Left ventricle myocardium inferior (tissue), 1 donor: ENCODE measurements at regions of chr17 and their contacts with region 1.

Region 1: DNA sequence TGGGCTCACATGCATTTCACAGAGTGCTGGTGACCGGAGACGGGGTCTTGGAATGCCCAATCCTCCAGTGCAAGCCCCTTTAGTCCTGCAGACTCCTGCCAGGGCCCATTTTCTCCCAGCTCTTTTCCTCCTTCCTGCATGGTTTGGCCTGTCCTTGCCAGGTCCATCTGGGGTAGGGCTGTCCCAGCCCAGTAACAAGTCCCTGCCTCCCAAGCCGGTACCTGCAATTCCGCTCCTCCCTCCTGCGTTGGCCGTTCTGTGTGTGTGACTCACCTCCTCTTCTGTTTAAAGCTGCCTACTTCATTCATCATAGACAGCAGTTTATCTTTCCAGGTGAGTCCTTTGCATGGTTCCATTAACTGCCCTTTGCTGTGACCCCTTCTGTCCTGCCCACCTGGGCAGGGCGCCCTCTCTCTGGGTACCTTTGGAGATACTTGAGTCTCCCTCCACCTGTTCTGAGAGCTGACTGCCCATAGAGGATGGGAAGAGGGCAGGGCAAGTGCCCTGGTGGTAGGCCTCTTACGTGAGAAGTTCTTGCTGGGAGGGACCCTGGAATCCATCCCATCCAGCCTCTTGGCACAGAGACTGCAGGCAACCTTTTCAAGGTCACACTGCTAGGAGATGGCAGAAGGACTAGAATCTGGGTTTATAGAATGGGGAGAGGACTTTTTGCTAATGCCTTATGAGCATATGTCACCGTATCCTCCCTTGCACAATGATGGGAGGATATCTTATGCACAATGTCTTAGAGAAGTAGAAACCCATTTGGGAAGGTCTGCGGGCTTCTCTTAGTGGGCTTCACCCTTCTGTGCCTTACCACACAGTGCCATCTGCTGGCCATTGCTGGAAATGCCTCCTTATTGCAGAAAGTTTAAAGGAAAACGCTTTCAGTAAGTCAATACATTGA is 29.7 kb upstream of the LGALS9 start:
- DNase-seq: peak; percentile 73
- H3K4me3 ChIP-seq: no peak overlapping the region
- H3K27ac ChIP-seq: no peak overlapping the region
- H3K4me1 ChIP-seq: peaks cover 30% of the 10 kb centered on the region
- H3K27me3 ChIP-seq: no peaks in the 10 kb centered on the region
- CTCF ChIP-seq: peak; percentile 96

Region 2: GRCh38 chr17:27236717-27237315 is 364.5 kb before region 1 on chr17:
- intact Hi-C with region 1: loop called (anchors 2 kb)
- DNase-seq: peak; percentile 57
- H3K4me3 ChIP-seq: no peak overlapping the region
- H3K27ac ChIP-seq: no peak overlapping the region
- H3K4me1 ChIP-seq: no peaks in the 10 kb centered on the region
- H3K27me3 ChIP-seq: no peaks in the 10 kb centered on the region
- CTCF ChIP-seq: peak; percentile 97

Region 3: GRCh38 chr17:27247071-27247957 is 354.0 kb before region 1 on chr17:
- intact Hi-C with region 1: no loop called
- DNase-seq: peak; percentile 61
- H3K4me3 ChIP-seq: no peak overlapping the region
- H3K27ac ChIP-seq: peak overlapping the region; percentile 90
- H3K4me1 ChIP-seq: peaks cover 55% of the 10 kb centered on the region
- H3K27me3 ChIP-seq: no peaks in the 10 kb centered on the region
- CTCF ChIP-seq: no peak

Region 4: GRCh38 chr17:27353461-27354050 is 247.8 kb before region 1 on chr17:
- intact Hi-C with region 1: loop called (anchors 5 kb)
- DNase-seq: peak; percentile 92
- H3K4me3 ChIP-seq: peak overlapping the region; percentile 77
- H3K27ac ChIP-seq: peak overlapping the region; percentile 97
- H3K4me1 ChIP-seq: peaks cover 34% of the 10 kb centered on the region
- H3K27me3 ChIP-seq: no peaks in the 10 kb centered on the region
- CTCF ChIP-seq: peak; percentile 97

Region 5: GRCh38 chr17:27455914-27456680 is 145.2 kb before region 1 on chr17 and contains the start of gene KSR1:
- intact Hi-C with region 1: loop called (anchors 10 kb)
- DNase-seq: peak; percentile 82
- H3K4me3 ChIP-seq: peak within 1 kb of the TSS; percentile 89
- H3K27ac ChIP-seq: peak within 1 kb of the TSS; percentile 84
- H3K4me1 ChIP-seq: peaks cover 39% of the 10 kb centered on the region
- H3K27me3 ChIP-seq: no peaks in the 10 kb centered on the region
- CTCF ChIP-seq: peak; percentile 57
- total RNA-seq, gene KSR1: 9.5 TPM

Region 6: GRCh38 chr17:27569257-27569722 is 32.0 kb before region 1 on chr17:
- intact Hi-C with region 1: no loop called
- DNase-seq: no peak
- H3K4me3 ChIP-seq: no peak overlapping the region
- H3K27ac ChIP-seq: peak overlapping the region; percentile 30
- H3K4me1 ChIP-seq: peaks cover 67% of the 10 kb centered on the region
- H3K27me3 ChIP-seq: no peaks in the 10 kb centered on the region
- CTCF ChIP-seq: peak; percentile 65

Region 7: GRCh38 chr17:27654654-27655524 is 53.6 kb after region 1 on chr17:
- intact Hi-C with region 1: loop called (anchors 2 kb)
- DNase-seq: peak; percentile 65
- H3K4me3 ChIP-seq: no peak overlapping the region
- H3K27ac ChIP-seq: no peak overlapping the region
- H3K4me1 ChIP-seq: peaks cover under 1% of the 10 kb centered on the region
- H3K27me3 ChIP-seq: peaks cover 5% of the 10 kb centered on the region
- CTCF ChIP-seq: peak; percentile 91

Region 8: GRCh38 chr17:28065706-28066105 is 464.4 kb after region 1 on chr17:
- intact Hi-C with region 1: no loop called
- DNase-seq: no peak
- H3K4me3 ChIP-seq: no peak overlapping the region
- H3K27ac ChIP-seq: peak overlapping the region; percentile 30
- H3K4me1 ChIP-seq: peaks cover 32% of the 10 kb centered on the region
- H3K27me3 ChIP-seq: no peaks in the 10 kb centered on the region
- CTCF ChIP-seq: no peak